ENCODE measurements at regions of chr2 and their contacts with region 1.

Region 1: DNA sequence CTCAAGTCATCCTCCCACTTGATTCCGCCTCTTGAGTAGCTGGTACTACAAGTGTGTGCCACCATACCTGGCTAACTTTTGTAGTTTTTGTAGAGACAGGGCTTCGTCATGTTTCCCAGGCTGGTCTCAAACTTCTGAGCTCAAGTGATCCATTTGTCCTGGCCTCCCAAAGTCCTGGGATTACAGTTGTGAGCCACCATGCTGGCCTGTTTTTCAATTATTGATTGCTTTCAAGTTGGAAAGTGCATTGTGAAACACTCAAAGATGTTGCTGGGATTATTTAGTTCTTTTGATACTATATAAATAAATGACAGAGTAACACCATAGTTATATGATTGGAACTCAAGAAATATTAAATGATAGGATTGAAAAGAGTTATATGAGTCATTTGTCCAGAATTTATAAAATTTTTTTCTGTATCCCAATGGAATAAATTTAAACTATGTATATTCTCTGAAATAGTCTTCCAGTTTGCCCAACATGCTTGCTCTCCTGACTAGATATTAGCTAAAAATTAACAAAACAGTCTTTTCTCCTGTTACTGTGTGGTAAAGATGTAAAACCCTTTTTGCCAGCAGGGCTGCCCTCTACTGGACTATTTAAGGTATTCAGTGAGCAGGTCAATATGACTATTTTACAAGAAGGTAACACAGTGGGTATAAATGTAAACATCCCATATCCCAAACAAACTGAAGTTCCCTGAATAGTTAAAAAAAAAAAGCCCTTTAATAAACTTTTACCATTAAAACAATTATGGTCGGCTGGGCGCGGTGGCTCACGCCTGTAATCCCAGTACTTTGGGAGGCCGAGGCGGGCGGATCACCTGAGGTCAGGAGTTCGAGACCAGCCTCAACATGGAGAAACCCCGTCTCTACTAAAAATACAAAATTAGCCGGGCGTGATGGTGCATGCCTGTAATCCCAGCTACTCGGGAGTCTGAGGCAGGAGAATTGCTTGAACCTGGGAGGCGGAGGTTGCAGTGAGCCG is 42.7 kb downstream of the ACSL3 start:
- DNase-seq: peak; percentile 73
- ATAC-seq: peak; percentile 24; the same call in 1 of the 2 replicates
- H3K4me3 ChIP-seq: no peak overlapping the region
- H3K27ac ChIP-seq: peak overlapping the region; percentile 80; the same call in 1 of the 2 replicates
- H3K4me1 ChIP-seq: peaks cover 36% of the 10 kb centered on the region
- H3K27me3 ChIP-seq: no peaks in the 10 kb centered on the region
- CTCF ChIP-seq: peak; percentile 77
- POLR2A ChIP-seq: no peak
- RAD21 ChIP-seq: peak; percentile 79

Region 2: DNA sequence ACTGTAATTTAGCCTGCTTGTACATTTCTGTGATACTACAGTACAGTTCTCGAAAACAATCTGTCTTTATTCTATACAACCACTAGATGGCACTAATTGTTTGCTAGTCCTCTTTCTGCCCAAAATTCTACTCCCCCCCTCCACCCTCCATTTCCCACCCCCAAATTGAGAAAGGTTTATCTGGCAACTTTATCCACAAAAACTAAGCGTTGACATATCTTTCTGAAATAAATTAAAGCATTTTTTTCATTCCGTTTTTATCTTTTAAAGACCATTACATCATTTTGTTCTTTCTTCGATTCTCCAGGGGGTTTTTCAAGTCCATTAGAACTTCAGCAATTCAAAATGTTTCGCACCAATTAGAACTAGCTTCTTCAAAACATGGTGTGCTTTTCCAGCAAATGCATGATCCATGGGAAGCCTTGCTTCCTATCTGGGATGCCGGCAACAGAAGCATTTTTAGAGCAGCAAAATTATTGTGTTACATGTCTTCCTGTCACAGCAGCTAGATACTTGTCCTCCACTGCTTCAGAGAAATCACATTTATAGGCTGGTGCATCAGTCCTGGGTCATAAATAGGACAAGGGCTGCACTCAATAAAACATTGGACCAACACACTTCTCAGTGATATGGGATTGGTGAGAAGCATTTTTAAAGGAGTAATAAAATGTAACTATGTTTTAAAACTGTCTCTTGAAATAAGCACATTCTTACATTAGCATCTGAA is 846.0 kb before region 1 on chr2:
- CTCF ChIA-PET with region 1: no interaction called
- POLR2A ChIA-PET with region 1: no interaction called
- dilution Hi-C with region 1: no loop called
- in situ Hi-C with region 1: no loop called
- intact Hi-C with region 1: loop called (anchors 10 kb)
- DNase-seq: no peak
- ATAC-seq: peak; percentile 54
- H3K4me3 ChIP-seq: no peak overlapping the region
- H3K27ac ChIP-seq: no peak overlapping the region
- H3K4me1 ChIP-seq: no peaks in the 10 kb centered on the region
- H3K27me3 ChIP-seq: peaks cover 9% of the 10 kb centered on the region
- CTCF ChIP-seq: peak; percentile 55
- POLR2A ChIP-seq: no peak
- RAD21 ChIP-seq: peak; percentile 55

Region 3: DNA sequence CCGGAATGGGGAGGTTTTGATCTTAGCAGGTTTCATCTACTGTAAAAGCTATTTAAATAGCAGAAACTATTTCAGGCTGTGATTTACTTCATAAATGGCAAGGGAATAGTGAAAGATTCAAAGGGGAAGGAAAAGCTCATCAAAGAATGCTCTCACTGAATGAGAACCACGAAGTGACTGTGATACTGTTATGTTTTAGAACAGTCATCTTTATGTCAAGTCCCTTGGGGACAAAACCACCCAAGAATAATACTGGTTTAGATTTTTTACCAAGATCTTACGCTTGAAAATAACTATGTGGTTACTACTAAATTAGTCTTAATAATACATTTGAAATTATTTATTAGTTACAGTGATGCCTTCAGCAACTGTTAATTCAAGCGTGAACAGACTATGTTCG is 275.8 kb before region 1 on chr2:
- CTCF ChIA-PET with region 1: no interaction called
- POLR2A ChIA-PET with region 1: no interaction called
- dilution Hi-C with region 1: no loop called
- in situ Hi-C with region 1: no loop called
- intact Hi-C with region 1: no loop called
- DNase-seq: no peak
- ATAC-seq: no peak
- H3K4me3 ChIP-seq: no peak overlapping the region
- H3K27ac ChIP-seq: no peak overlapping the region
- H3K4me1 ChIP-seq: no peaks in the 10 kb centered on the region
- H3K27me3 ChIP-seq: no peaks in the 10 kb centered on the region
- CTCF ChIP-seq: no peak
- POLR2A ChIP-seq: no peak
- RAD21 ChIP-seq: no peak

Region 4: GRCh38 chr2:222690564-222691200 is 212.8 kb before region 1 on chr2:
- CTCF ChIA-PET with region 1: interaction called, 6 read pairs
- POLR2A ChIA-PET with region 1: interaction called, 4 read pairs
- dilution Hi-C with region 1: no loop called
- in situ Hi-C with region 1: loop called (anchors 5 kb)
- intact Hi-C with region 1: loop called (anchors 1 kb)
- DNase-seq: peak; percentile 78
- ATAC-seq: peak; percentile 92
- H3K4me3 ChIP-seq: no peak overlapping the region
- H3K27ac ChIP-seq: no peak overlapping the region
- H3K4me1 ChIP-seq: no peaks in the 10 kb centered on the region
- H3K27me3 ChIP-seq: no peaks in the 10 kb centered on the region; the same call in 1 of the 2 replicates
- CTCF ChIP-seq: peak; percentile 100
- POLR2A ChIP-seq: no peak
- RAD21 ChIP-seq: peak; percentile 85

Region 5: GRCh38 chr2:222707689-222708525 is 195.6 kb before region 1 on chr2:
- CTCF ChIA-PET with region 1: interaction called, 18 read pairs
- POLR2A ChIA-PET with region 1: no interaction called
- dilution Hi-C with region 1: no loop called
- in situ Hi-C with region 1: no loop called
- intact Hi-C with region 1: loop called (anchors 1 kb)
- DNase-seq: peak; percentile 87
- ATAC-seq: peak; percentile 18
- H3K4me3 ChIP-seq: no peak overlapping the region
- H3K27ac ChIP-seq: no peak overlapping the region
- H3K4me1 ChIP-seq: peaks cover 11% of the 10 kb centered on the region
- H3K27me3 ChIP-seq: no peaks in the 10 kb centered on the region
- CTCF ChIP-seq: peak; percentile 81
- POLR2A ChIP-seq: no peak
- RAD21 ChIP-seq: peak; percentile 76

Region 6: DNA sequence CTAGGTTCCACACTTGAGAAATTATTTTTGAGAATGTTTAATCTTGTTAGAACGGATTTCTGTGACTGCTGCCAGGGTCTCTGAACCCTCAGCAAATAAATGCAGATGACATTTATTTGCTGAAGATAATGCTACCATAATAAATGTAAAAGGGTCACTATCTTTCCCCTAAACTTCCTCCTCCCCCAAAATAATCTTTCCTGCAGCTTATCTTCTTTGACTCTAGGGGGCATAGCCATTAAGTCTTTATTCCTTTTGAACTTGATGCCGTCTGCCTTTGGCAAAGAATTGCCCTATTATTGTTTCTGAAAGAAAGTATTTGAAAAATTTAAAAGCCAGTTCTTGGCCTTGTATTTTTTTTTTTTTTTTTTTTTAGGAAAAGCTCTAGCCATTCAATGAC is 106.3 kb before region 1 on chr2:
- CTCF ChIA-PET with region 1: interaction called, 6 read pairs
- POLR2A ChIA-PET with region 1: no interaction called
- dilution Hi-C with region 1: no loop called
- in situ Hi-C with region 1: no loop called
- intact Hi-C with region 1: loop called (anchors 1 kb)
- DNase-seq: peak; percentile 34
- ATAC-seq: peak; percentile 52
- H3K4me3 ChIP-seq: no peak overlapping the region
- H3K27ac ChIP-seq: no peak overlapping the region
- H3K4me1 ChIP-seq: peaks cover 8% of the 10 kb centered on the region
- H3K27me3 ChIP-seq: no peaks in the 10 kb centered on the region
- CTCF ChIP-seq: peak; percentile 47
- POLR2A ChIP-seq: no peak
- RAD21 ChIP-seq: peak; percentile 41

Region 7: GRCh38 chr2:222930862-222931261 is 27.3 kb after region 1 on chr2:
- CTCF ChIA-PET with region 1: interaction called, 10 read pairs
- POLR2A ChIA-PET with region 1: no interaction called
- dilution Hi-C with region 1: no loop called
- in situ Hi-C with region 1: no loop called
- intact Hi-C with region 1: no loop called
- DNase-seq: peak; percentile 18
- ATAC-seq: no peak
- H3K4me3 ChIP-seq: no peak overlapping the region
- H3K27ac ChIP-seq: no peak overlapping the region
- H3K4me1 ChIP-seq: no peaks in the 10 kb centered on the region
- H3K27me3 ChIP-seq: no peaks in the 10 kb centered on the region
- CTCF ChIP-seq: no peak
- POLR2A ChIP-seq: no peak
- RAD21 ChIP-seq: no peak

Region 8: DNA sequence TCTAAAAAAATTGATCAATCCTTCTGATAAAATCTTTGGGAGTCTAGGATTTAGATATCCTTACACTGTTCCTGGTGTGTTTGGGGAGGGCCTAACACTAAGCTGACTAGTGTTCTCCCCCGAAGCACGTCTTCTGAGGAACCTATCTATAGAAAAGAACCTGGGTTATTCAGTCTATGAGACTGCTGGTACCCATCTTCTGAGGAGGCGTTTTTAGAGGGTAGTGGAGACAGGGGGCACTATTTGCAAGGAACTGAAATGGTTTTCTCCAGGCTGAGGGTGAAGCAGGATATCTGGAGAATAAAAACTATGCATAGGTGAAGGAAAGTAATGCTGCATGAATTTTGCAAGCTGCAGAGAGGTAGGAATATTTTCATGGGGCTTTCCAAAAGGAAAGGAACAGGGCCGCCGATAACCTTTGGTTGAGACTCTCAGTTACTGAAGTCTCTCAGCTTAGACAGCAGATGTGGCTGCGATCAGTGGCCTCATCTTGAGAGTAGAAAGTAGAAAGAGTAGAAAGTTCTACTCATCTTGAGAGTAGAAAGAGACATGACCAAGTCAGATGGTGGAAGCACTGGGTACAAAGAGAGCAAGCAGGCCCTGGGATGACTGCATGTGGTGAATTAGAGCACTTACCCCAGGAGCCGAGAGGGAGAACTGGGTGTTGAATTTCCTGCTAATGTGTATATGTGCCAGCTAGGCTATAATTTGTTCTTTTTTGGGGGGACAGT is 116.6 kb after region 1 on chr2:
- CTCF ChIA-PET with region 1: no interaction called
- POLR2A ChIA-PET with region 1: no interaction called
- dilution Hi-C with region 1: no loop called
- in situ Hi-C with region 1: no loop called
- intact Hi-C with region 1: no loop called
- DNase-seq: no peak
- ATAC-seq: no peak
- H3K4me3 ChIP-seq: no peak overlapping the region
- H3K27ac ChIP-seq: no peak overlapping the region
- H3K4me1 ChIP-seq: no peaks in the 10 kb centered on the region
- H3K27me3 ChIP-seq: no peaks in the 10 kb centered on the region
- CTCF ChIP-seq: no peak
- POLR2A ChIP-seq: no peak
- RAD21 ChIP-seq: no peak

Region 9: DNA sequence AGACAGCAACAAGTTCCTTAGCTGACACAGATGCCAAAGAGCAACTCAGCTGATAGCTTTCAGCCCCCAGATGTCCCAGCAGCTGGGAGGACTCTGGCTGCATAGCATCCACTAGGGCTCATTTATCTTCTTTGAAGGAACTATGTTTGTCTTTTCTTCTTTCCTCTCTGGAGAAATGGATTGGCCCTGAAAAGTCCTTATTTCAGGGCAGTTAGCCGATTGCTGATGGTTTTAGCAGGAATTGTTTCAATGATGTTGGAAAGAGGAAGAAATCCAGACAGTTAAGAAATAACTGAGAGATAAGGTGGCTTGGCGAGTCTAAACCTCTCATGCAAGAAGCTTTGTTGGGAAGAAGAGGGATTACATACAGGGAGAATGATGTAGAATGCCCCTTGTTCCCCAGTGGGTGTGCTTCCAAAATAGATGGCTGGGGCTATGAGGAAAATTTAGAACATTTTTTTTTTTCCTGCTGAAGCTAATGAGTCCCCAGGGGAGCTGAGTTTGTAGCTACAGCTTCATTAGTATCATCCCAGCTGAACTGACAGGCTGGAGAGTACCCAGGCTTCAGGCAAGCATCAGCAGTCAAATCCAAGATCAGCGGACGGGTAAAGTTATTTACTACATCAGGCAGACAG is 1169.1 kb after region 1 on chr2:
- CTCF ChIA-PET with region 1: no interaction called
- POLR2A ChIA-PET with region 1: no interaction called
- dilution Hi-C with region 1: no loop called
- in situ Hi-C with region 1: no loop called
- intact Hi-C with region 1: no loop called
- DNase-seq: peak; percentile 14
- ATAC-seq: peak; percentile 27
- H3K4me3 ChIP-seq: no peak overlapping the region
- H3K27ac ChIP-seq: no peak overlapping the region
- H3K4me1 ChIP-seq: peaks cover 2% of the 10 kb centered on the region; the same call in 1 of the 2 replicates
- H3K27me3 ChIP-seq: peaks cover 3% of the 10 kb centered on the region; the same call in 1 of the 2 replicates
- CTCF ChIP-seq: no peak
- POLR2A ChIP-seq: no peak
- RAD21 ChIP-seq: no peak